ENCODE measurements at regions of chr14 and their contacts with region 1.

Region 1: GRCh38 chr14:35341446-35342159 is 49.4 kb downstream of the PSMA6 start:
- DNase-seq: peak; percentile 98
- ATAC-seq: peak; percentile 92

Region 2: GRCh38 chr14:35261774-35262173 is 79.8 kb before region 1 on chr14:
- intact Hi-C with region 1: no loop called
- DNase-seq: no peak
- ATAC-seq: no peak

Region 3: DNA sequence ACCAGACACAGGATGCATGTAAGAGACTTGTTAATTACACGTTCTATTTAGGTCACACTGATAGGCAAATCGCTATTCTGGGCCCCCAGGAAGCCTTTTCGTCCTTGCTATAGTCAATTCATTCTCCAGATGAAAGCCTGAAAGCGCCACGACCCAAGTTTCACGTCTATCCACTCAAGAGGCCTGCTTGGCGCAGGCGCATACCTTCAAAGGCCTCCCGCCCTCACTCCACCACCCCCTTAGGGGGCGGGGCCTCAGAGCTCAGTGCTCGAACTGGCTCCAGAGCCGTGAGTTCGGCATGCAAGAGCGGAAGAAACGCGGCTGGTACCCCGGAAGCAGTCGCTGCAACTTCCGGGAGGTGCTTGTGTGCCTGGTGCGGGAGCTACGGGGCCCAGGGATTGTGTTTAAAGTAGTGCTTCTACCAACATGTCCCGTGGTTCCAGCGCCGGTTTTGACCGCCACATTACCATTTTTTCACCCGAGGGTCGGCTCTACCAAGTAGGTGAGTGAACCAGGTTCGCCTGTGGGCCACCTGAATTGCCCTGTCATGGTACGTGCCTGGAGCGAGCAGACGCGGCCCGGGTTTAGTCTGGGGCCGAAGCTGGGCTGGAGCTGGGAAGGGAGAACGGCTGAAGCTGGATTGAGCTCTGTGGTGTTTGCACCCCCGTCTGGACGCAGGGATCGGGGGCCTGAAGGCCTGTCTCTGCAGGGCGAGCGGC is 49.4 kb before region 1 on chr14 and contains the start of gene PSMA6:
- intact Hi-C with region 1: loop called (anchors 2 kb)
- DNase-seq: peak; percentile 100
- ATAC-seq: peak; percentile 100
- total RNA-seq, gene PSMA6: 195 TPM

Region 4: DNA sequence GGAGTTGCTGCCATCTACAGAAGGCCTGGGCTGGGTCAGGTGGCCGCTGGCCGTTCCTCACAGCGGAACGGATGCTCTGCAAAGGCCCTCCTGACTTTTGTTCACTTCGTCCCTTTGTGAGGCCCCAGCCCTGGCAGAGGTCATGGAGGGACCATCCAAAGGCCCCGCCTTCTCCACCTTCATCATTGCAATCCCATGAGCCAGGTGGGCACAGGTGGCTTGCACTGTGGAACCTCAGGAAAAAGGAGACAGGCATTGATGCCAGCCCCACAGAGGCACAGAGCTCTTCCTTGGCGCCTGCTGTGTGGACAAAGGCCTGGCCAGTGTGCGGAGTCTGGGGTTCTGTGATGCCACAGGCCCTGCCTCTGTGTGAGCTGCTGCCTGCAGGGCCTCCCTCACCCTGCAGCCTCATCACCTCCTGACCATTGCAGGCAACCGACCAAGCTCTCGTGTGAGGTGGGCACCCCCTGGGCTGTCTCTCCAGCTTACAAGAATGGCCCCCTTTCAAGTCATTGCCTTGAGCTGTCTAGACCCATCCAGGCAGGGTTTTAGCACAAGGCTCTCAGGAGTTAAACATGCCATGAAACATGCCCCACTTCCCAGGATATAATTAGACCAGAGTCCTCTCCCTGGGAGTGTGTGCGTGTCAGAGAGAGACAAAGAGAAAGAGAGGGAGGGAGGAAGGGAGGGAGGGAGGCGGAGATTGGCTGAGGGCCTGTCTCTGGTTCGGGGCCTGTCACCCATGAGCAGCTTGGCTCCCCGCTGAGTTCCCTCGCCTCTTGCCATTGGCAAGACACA is 43.6 kb after region 1 on chr14:
- intact Hi-C with region 1: loop called (anchors 1 kb)
- DNase-seq: peak; percentile 84
- ATAC-seq: peak; percentile 94

Measured in Right ventricle myocardium inferior (tissue), 1 donor.